HepG2 (cell line): ENCODE measurements at regions of chr13 and their contacts with region 1.

Region 1: DNA sequence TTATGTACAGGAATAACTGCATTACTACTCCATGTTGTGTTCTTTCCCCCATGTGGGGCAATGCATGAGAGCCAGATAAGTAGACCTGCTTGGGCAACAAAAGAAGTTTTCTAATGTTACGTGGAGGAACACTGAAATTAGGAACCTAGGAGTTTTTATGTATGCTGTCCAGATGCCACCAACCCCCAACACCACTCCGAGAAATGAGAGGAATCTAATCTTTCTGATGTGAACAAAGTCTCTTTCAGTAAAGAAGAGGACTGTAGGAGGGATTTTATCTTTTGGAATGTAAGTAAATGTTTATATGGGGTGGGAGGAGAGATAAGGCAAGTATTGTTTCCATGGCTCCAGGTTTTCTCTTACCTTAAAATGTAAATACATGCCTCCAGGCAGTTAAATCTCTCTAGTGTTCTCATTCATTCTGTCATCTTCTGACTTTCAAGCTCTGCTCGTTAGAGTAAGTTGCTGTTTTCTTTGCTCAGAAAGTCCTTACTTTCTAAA is 820.6 kb downstream of the PCDH17 start:
- DNase-seq: peak; percentile 96
- ATAC-seq: peak; percentile 99
- H3K4me3 ChIP-seq: no peak overlapping the region; a peak in 1 of 6 replicates
- H3K27ac ChIP-seq: peak overlapping the region; percentile 92
- H3K4me1 ChIP-seq: peaks cover 25% of the 10 kb centered on the region
- H3K27me3 ChIP-seq: no peaks in the 10 kb centered on the region
- CTCF ChIP-seq: no peak
- EP300 ChIP-seq: peak in 1 of 2 experiments; percentile 93; a peak in 3 of 4 replicates
- POLR2A ChIP-seq: peak in 1 of 2 experiments; percentile 60; a peak in 1 of 4 replicates
- RAD21 ChIP-seq: no peak

Region 2: GRCh38 chr13:58298556-58299135 is 153.5 kb before region 1 on chr13:
- CTCF ChIA-PET with region 1: no interaction called
- POLR2A ChIA-PET with region 1: no interaction called
- in situ Hi-C with region 1: no loop called
- intact Hi-C with region 1: loop called (anchors 5 kb)
- DNase-seq: peak; percentile 33
- ATAC-seq: peak; percentile 94
- H3K4me3 ChIP-seq: no peak overlapping the region
- H3K27ac ChIP-seq: no peak overlapping the region
- H3K4me1 ChIP-seq: peaks cover 17% of the 10 kb centered on the region
- H3K27me3 ChIP-seq: no peaks in the 10 kb centered on the region
- CTCF ChIP-seq: no peak
- EP300 ChIP-seq: no peak; a peak in 1 of 4 replicates
- POLR2A ChIP-seq: no peak
- RAD21 ChIP-seq: no peak

Region 3: DNA sequence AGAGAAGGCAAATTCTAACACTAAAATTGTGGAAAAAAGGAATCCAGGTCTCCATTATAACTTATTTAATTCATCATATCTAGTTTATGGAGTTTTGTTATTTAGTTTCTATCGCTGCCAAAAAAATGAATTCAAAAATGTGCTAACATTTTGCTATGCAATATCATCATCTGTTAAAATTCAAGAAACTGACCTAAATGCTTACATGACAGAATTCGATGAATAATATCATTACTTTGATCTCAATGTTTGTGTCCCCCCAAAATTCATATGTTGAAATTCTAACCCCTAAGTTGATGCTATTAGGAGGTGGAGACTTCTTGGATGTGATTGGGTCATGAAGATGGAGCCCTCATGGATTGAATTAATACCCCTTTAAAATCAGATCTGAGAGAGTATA is 45.6 kb before region 1 on chr13:
- CTCF ChIA-PET with region 1: no interaction called
- POLR2A ChIA-PET with region 1: no interaction called
- in situ Hi-C with region 1: no loop called
- intact Hi-C with region 1: no loop called
- DNase-seq: no peak
- ATAC-seq: no peak
- H3K4me3 ChIP-seq: no peak overlapping the region
- H3K27ac ChIP-seq: no peak overlapping the region
- H3K4me1 ChIP-seq: no peaks in the 10 kb centered on the region
- H3K27me3 ChIP-seq: no peaks in the 10 kb centered on the region
- CTCF ChIP-seq: no peak
- EP300 ChIP-seq: no peak
- POLR2A ChIP-seq: no peak
- RAD21 ChIP-seq: no peak

Region 4: GRCh38 chr13:58467176-58467575 is 15.0 kb after region 1 on chr13:
- CTCF ChIA-PET with region 1: no interaction called
- POLR2A ChIA-PET with region 1: no interaction called
- in situ Hi-C with region 1: no loop called
- intact Hi-C with region 1: no loop called
- DNase-seq: no peak
- ATAC-seq: no peak
- H3K4me3 ChIP-seq: no peak overlapping the region
- H3K27ac ChIP-seq: no peak overlapping the region
- H3K4me1 ChIP-seq: peaks cover 6% of the 10 kb centered on the region; the same call in 1 of the 2 replicates
- H3K27me3 ChIP-seq: no peaks in the 10 kb centered on the region
- CTCF ChIP-seq: no peak
- EP300 ChIP-seq: no peak
- POLR2A ChIP-seq: no peak
- RAD21 ChIP-seq: no peak